ENCODE measurements at regions of chr16 and their contacts with region 1.

Region 1: DNA sequence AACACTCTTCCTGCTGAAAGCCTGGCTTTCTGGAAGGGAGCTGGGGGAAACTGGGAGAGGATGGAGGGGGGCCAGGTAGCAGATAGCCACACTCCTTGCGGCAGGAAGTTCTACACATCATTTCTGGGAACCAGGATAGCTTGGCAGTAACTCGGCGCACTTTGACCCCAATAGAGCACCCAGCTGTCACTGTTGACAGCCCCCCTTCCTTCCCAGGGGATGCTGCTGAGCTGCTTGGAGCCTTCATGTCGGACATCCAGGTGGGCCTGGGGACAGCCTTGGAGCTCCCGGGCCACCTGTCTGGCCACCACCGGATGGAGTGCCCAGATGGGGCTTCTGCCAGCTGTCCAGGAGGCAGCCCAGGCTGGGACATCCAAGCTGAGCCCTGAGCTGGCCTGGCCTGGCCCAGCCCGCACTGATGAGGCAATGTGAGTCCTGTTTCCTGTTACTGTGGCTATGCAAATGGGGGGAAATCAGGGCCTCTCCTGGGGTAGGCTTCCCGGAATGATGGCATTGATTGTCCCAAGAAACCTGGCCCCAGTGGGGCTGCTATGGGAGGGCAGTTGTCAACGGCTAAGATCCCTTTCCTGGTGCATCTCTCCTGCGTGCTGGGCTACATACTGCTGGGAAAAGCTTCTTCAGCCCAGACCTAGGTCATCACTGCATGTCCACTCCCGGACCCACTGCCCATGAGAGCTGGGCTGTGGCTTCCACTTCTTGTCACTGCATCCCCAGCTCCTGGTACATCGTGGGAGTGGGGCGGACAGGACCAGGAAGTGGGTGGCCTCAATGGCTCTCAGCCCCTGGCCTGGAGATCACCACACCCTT is 50.0 kb downstream of the SOCS1 start:
- DNase-seq: no peak
- H3K4me3 Mint-ChIP-seq: no peak overlapping the region
- H3K27ac Mint-ChIP-seq: peak overlapping the region; percentile 83
- H3K4me1 Mint-ChIP-seq: peaks cover 55% of the 10 kb centered on the region
- H3K27me3 Mint-ChIP-seq: no peaks in the 10 kb centered on the region

Region 2: DNA sequence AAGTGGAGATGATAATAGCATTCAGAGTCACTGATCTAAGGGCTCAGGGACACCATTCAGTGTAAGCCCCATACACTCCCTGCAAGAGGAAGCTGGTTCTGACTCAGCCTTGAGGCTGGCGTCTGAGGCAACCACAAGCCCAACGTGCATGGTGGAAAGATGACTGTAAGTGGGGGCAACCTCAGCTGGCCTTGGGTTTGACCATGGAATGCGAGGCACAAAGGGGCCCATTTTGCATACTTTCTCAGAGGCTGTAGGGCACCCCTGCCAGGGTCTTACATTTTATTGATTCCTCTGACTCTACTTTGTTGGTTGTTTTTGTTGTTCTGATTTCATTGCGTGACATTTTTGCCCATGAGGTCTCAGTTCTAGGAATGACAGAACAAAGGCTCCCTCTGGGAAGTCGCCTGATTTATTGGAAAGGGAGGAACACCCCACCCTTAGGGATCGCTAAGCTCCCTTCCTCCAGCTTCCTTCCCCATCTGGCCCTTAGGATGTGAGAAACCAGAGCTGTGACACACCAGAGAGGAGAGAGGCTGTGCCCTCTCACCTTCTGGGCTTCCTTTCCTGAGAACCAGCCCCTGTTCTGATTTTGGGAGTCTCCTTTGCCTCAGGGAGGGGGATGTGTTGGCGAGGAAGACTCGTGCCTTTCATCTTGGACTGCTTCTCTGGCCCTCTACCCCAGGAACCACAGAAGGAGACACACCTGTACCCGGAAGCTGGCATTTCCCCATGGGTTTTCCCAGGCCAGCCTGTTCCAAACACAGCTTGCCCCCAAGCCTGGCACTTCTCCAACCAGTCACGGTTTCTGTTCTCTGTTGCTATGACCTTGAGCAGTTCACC is 334.6 kb before region 1 on chr16:
- CTCF ChIA-PET with region 1: no interaction called
- POLR2A ChIA-PET with region 1: no interaction called
- DNase-seq: peak; percentile 88
- H3K4me3 Mint-ChIP-seq: peak overlapping the region; percentile 48
- H3K27ac Mint-ChIP-seq: peak overlapping the region; percentile 95
- H3K4me1 Mint-ChIP-seq: peaks cover 94% of the 10 kb centered on the region
- H3K27me3 Mint-ChIP-seq: no peaks in the 10 kb centered on the region

Region 3: DNA sequence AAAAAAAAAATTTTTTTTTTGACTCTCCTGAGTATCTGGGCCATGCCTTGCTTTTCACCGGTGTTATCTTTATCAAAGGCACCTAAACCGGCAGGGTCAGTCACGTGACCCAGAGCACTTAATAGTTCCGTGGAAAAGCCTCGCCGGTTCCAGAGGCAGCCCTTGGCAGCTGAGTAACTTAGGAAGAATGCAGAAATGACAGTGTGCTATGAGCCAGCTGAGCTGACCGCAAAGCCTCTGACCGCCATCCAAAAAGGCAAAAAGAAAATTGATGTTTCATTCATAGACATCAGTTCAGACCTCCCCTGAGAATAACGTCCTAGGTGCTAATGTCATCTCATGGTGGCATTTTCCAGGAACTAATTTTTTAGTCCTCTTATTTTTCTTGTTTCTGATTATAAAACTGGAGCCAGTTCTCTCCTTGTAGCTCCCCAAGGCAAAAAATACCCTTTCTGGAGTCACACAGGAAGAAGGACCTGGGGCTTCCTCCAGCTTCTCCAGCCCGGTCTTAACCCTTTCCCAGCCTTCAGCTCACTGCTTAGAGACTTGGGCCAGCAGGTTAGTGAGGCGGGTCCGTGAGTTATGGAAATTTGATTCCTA is 72.5 kb before region 1 on chr16:
- CTCF ChIA-PET with region 1: no interaction called
- POLR2A ChIA-PET with region 1: no interaction called
- DNase-seq: no peak
- H3K4me3 Mint-ChIP-seq: no peak overlapping the region
- H3K27ac Mint-ChIP-seq: no peak overlapping the region
- H3K4me1 Mint-ChIP-seq: peaks cover 53% of the 10 kb centered on the region
- H3K27me3 Mint-ChIP-seq: no peaks in the 10 kb centered on the region

Region 4: GRCh38 chr16:11218604-11218962 is 12.6 kb after region 1 on chr16:
- CTCF ChIA-PET with region 1: interaction called, 14 read pairs
- POLR2A ChIA-PET with region 1: interaction called, 4 read pairs
- DNase-seq: no peak
- H3K4me3 Mint-ChIP-seq: no peak overlapping the region
- H3K27ac Mint-ChIP-seq: no peak overlapping the region
- H3K4me1 Mint-ChIP-seq: peaks cover 32% of the 10 kb centered on the region
- H3K27me3 Mint-ChIP-seq: no peaks in the 10 kb centered on the region

Region 5: GRCh38 chr16:11297492-11298142 is 91.6 kb after region 1 on chr16:
- CTCF ChIA-PET with region 1: no interaction called
- POLR2A ChIA-PET with region 1: no interaction called
- DNase-seq: peak; percentile 79
- H3K4me3 Mint-ChIP-seq: peak overlapping the region; percentile 4
- H3K27ac Mint-ChIP-seq: no peak overlapping the region
- H3K4me1 Mint-ChIP-seq: peaks cover 18% of the 10 kb centered on the region
- H3K27me3 Mint-ChIP-seq: peaks cover 38% of the 10 kb centered on the region

Measured in activated CD4-positive, alpha-beta memory T cell treated with anti-CD3 and anti-CD28 coated beads, Interleukin-2, amount 10 ng/mL, durations not matched to agents 7 days and 5 days (primary cell).